ENCODE measurements at regions of chr3 and their contacts with region 1.

Region 1: GRCh38 chr3:65996589-65996988 is 42.1 kb downstream of the MAGI1 start:
- DNase-seq: peak; percentile 79
- H3K4me3 Mint-ChIP-seq: peak overlapping the region; percentile 53
- H3K27ac Mint-ChIP-seq: peak overlapping the region; percentile 36
- H3K4me1 Mint-ChIP-seq: peaks cover 40% of the 10 kb centered on the region
- H3K27me3 Mint-ChIP-seq: no peaks in the 10 kb centered on the region
- CTCF ChIP-seq: no peak

Region 2: GRCh38 chr3:65894679-65895453 is 101.7 kb before region 1 on chr3:
- CTCF ChIA-PET with region 1: no interaction called
- POLR2A ChIA-PET with region 1: interaction called, 4 read pairs
- intact Hi-C with region 1: loop called (anchors 5 kb)
- DNase-seq: peak; percentile 74
- H3K4me3 Mint-ChIP-seq: no peak overlapping the region
- H3K27ac Mint-ChIP-seq: peak overlapping the region; percentile 87
- H3K4me1 Mint-ChIP-seq: peaks cover 17% of the 10 kb centered on the region
- H3K27me3 Mint-ChIP-seq: no peaks in the 10 kb centered on the region
- CTCF ChIP-seq: no peak

Region 3: DNA sequence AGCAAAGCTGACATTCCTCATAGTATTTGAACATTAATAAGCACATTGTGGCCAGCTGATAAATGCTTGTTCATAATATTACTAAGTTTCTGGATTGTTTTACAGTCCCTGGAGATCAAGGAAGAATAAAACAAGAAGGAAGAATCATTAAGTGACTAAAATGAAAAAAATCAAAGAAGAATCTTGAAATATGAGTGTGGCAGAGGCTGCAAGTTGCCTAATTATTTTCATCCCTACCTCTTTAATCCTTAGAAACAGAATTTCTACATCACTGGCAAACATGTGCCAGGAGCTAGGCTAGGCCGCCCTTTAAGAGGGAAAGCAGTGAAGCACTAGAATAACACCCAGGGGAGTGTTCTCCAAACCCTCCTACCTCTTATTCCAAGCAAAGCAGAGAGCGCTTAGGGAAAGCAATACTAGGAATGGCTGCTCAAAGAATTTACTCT is 56.8 kb before region 1 on chr3:
- CTCF ChIA-PET with region 1: no interaction called
- POLR2A ChIA-PET with region 1: no interaction called
- intact Hi-C with region 1: no loop called
- DNase-seq: no peak
- H3K4me3 Mint-ChIP-seq: no peak overlapping the region
- H3K27ac Mint-ChIP-seq: no peak overlapping the region
- H3K4me1 Mint-ChIP-seq: no peaks in the 10 kb centered on the region
- H3K27me3 Mint-ChIP-seq: no peaks in the 10 kb centered on the region
- CTCF ChIP-seq: no peak

Region 4: DNA sequence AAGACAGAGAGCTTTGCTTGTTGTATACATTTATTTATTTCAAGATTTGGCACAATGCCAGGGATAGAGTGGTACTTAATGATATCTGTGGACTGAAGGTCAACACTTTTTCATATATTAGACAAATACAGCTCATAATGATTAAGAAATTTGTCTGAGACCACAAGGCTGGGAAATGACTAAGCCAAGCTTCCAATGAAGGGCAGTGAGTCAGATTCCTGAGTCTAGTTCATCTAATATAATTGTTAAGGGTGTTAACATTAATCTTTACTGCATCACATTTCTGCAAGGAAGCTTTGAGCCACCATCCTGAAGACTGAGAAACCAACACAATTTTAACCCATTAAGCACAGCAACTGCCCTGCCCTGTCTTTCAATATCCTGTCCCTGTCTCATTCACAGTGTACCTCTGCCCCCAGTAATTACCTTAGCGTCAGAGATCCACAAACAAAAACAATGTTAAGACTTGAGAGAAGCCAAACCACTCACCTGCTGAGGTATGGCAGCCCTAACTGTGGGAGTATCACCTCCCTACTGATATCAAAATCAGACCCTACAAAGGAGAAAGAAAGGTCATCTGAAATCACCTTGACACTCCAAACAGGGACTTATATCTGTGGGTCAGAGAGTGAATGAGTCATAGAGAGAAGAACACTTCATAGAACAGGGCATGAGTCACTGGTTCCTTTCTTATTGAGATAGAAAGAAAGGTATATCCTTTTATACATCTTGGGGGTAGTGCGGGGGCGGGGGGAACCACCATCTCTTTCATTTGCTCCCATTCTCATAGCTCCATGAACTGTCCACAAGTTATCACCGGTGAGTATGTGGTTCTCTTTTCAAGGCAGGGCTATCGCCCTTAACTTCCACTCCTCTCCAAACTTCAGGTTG is 32.6 kb before region 1 on chr3:
- CTCF ChIA-PET with region 1: interaction called, 3 read pairs
- POLR2A ChIA-PET with region 1: interaction called, 10 read pairs
- intact Hi-C with region 1: loop called (anchors 2 kb)
- DNase-seq: peak; percentile 88
- H3K4me3 Mint-ChIP-seq: no peak overlapping the region
- H3K27ac Mint-ChIP-seq: peak overlapping the region; percentile 37
- H3K4me1 Mint-ChIP-seq: peaks cover 23% of the 10 kb centered on the region
- H3K27me3 Mint-ChIP-seq: no peaks in the 10 kb centered on the region
- CTCF ChIP-seq: no peak

Region 5: DNA sequence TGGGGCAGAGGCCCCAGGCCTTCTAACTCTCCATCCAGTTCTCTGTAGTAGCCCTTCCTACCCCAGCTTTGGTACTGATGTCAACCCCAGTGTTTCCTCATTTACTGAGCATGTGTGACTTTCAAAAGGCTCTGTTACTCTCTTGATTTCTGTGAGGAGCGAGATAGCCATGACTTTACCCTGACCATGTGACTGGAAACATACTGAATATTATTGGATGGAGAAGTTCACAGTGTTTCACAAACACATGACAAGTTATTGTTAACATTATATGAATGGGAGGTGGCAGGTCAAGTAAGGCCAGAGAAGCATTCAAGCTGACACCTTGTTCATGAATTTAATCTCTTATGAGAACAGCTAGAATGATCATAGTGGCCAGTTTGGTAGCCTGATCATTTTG is 11.6 kb before region 1 on chr3:
- CTCF ChIA-PET with region 1: interaction called, 5 read pairs
- POLR2A ChIA-PET with region 1: interaction called, 11 read pairs
- intact Hi-C with region 1: no loop called
- DNase-seq: no peak
- H3K4me3 Mint-ChIP-seq: no peak overlapping the region
- H3K27ac Mint-ChIP-seq: no peak overlapping the region
- H3K4me1 Mint-ChIP-seq: no peaks in the 10 kb centered on the region
- H3K27me3 Mint-ChIP-seq: no peaks in the 10 kb centered on the region
- CTCF ChIP-seq: no peak

Region 6: DNA sequence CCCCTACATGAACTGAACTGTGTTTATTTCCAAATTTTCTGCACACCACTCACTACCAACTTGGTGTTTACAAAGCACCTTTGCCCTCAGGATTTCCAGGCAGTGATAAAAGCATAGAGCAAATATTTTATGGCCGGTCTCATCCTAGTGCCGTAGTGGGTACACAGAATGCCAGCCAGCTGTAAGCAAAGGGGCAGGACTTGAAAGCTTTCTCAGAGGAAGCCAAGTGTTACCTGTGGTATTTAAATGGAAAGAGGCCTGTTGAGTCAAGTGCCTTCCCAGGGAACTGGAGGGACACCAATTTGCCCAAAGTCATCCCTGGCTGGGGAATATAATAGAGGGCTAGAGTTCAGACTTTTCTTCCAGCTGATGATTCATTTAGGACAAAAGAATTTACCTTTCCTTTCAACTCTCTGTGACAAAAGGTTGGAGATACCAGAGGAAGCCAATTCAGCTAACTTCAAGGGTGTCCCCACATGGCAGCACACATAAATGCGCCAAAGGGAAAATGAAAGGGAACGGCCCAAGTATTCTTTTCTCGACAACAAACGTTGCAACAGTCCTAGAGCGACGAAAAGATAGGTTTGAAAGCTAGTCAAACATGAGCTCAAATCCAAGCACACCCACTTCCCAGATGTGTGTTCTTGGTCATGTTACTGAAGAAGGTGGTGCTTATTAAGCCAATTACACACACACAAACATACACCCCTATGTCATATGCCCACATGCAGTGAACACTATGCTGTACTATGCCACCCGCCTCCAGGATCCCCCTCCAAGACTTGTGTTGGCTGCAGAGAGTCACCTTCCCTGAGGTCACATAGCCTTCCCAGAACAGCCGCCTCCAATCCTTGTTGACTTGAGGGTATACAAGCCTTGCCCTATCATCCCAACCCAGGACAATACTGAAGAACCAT is 14.4 kb after region 1 on chr3:
- CTCF ChIA-PET with region 1: interaction called, 4 read pairs
- POLR2A ChIA-PET with region 1: interaction called, 11 read pairs
- intact Hi-C with region 1: no loop called
- DNase-seq: peak; percentile 30
- H3K4me3 Mint-ChIP-seq: peak overlapping the region; percentile 6
- H3K27ac Mint-ChIP-seq: no peak overlapping the region
- H3K4me1 Mint-ChIP-seq: peaks cover 9% of the 10 kb centered on the region
- H3K27me3 Mint-ChIP-seq: no peaks in the 10 kb centered on the region
- CTCF ChIP-seq: no peak

Region 7: DNA sequence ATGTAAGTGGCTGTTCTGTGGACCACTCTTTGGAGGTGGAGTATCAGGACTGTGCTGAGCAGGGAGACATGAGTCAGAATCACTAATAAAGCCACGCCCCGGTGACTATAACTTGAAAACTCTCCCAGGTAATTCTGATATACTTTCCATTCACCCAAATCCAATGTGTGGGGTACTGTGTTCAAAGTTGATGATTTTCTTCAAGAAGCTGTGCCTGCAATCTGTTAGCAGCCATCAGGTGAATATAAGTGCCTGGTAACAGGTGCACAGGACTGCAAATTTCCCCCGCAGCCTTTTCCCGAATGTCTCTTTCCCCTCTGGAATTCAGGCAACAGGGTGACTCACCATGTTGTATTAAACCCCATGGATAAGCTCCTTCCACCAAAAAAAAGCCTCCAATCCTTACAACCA is 25.1 kb after region 1 on chr3:
- CTCF ChIA-PET with region 1: interaction called, 3 read pairs
- POLR2A ChIA-PET with region 1: interaction called, 10 read pairs
- intact Hi-C with region 1: no loop called
- DNase-seq: peak; percentile 60
- H3K4me3 Mint-ChIP-seq: peak overlapping the region; percentile 66
- H3K27ac Mint-ChIP-seq: peak overlapping the region; percentile 21
- H3K4me1 Mint-ChIP-seq: peaks cover 9% of the 10 kb centered on the region
- H3K27me3 Mint-ChIP-seq: no peaks in the 10 kb centered on the region
- CTCF ChIP-seq: no peak

Region 8: DNA sequence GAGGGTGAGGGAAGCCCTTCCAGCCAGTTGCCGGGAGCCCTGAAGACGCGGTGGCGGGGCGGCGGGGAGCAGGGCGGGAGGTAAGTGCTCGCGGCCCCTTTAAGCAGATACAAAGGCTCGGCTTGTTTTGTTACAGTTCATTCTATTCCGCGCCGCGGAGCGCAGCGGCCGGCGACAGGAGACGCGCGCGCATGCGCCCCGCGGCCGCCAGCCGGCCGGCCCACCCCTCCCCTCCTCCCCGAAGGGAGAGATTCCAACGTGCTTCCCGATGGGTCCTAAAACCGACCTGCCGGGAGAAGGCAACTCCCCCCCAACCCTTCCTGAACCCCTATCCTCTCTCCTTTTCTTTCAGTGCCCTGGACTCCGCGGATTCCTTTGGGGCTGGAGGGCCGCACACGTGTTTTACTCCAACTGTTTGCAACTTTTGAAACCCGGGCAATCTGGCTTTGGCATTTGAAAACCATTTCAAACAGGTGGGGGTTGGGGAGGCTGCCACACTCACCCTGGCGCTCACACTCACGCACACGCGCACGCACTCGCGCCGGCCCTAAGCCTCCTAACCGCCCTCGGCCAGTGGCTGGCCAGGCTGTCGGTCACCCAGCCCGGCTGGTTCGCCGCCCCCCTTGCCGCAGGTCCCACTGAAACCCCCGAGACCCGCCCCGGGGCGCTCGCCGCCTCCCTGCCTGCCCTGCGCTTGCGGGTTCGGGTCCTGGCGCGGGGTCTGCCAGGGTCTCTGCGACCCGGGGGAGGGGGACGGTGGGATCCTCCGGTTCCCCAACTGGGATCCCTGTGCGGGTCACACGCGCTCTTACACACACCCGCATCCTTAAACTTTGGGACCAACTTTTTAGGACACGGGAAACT is 42.4 kb after region 1 on chr3 and contains the start of gene MAGI1:
- CTCF ChIA-PET with region 1: interaction called, 4 read pairs
- POLR2A ChIA-PET with region 1: interaction called, 11 read pairs
- intact Hi-C with region 1: loop called (anchors 2 kb)
- DNase-seq: peak; percentile 91
- H3K4me3 Mint-ChIP-seq: peak within 1 kb of the TSS; percentile 91
- H3K27ac Mint-ChIP-seq: peak within 1 kb of the TSS; percentile 89
- H3K4me1 Mint-ChIP-seq: peaks cover 23% of the 10 kb centered on the region
- H3K27me3 Mint-ChIP-seq: peaks cover 10% of the 10 kb centered on the region
- CTCF ChIP-seq: no peak
- total RNA-seq, gene MAGI1: 6.2 and 6.3 TPM in 2 replicates